WTC11 (cell line): ENCODE measurements at regions of chr17 and their contacts with region 1.

Region 1: DNA sequence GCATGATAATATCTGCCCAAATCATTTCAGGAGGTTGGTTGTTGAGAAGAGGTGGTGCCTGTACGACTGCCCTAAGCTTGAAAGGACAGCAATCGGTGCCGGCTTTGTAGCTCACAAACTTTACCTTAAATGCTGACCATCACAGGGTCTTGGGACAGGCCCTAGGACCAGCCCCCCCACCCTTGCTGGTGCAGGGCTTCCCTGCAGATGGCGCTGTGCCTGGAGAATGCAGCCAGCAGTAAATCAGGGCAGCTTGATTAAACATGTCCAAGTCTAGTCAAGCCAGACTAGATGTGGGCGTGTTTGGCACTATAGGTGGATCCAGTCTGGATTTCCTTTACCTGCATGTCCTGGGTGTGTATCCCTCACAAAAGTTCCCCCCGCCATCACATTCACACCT is 135.5 kb upstream of the CRHR1 start:
- DNase-seq: peak; percentile 80
- ATAC-seq: peak; percentile 85
- H3K4me3 Mint-ChIP-seq: no peak overlapping the region
- H3K27ac Mint-ChIP-seq: no peak overlapping the region
- H3K4me1 Mint-ChIP-seq: peaks cover 16% of the 10 kb centered on the region
- H3K27me3 Mint-ChIP-seq: no peaks in the 10 kb centered on the region
- CTCF ChIP-seq: peak; percentile 70

Region 2: GRCh38 chr17:45628019-45628418 is 20.6 kb before region 1 on chr17:
- CTCF ChIA-PET with region 1: no interaction called
- POLR2A ChIA-PET with region 1: no interaction called
- DNase-seq: peak; percentile 35
- ATAC-seq: peak; percentile 60
- H3K4me3 Mint-ChIP-seq: no peak overlapping the region
- H3K27ac Mint-ChIP-seq: no peak overlapping the region
- H3K4me1 Mint-ChIP-seq: no peaks in the 10 kb centered on the region
- H3K27me3 Mint-ChIP-seq: no peaks in the 10 kb centered on the region
- CTCF ChIP-seq: no peak

Region 3: GRCh38 chr17:45666046-45666600 is 17.5 kb after region 1 on chr17:
- CTCF ChIA-PET with region 1: interaction called, 13 read pairs
- POLR2A ChIA-PET with region 1: no interaction called
- DNase-seq: peak; percentile 26
- ATAC-seq: peak; percentile 50
- H3K4me3 Mint-ChIP-seq: no peak overlapping the region
- H3K27ac Mint-ChIP-seq: no peak overlapping the region
- H3K4me1 Mint-ChIP-seq: no peaks in the 10 kb centered on the region
- H3K27me3 Mint-ChIP-seq: no peaks in the 10 kb centered on the region; the same call in 1 of the 2 replicates
- CTCF ChIP-seq: no peak

Region 4: DNA sequence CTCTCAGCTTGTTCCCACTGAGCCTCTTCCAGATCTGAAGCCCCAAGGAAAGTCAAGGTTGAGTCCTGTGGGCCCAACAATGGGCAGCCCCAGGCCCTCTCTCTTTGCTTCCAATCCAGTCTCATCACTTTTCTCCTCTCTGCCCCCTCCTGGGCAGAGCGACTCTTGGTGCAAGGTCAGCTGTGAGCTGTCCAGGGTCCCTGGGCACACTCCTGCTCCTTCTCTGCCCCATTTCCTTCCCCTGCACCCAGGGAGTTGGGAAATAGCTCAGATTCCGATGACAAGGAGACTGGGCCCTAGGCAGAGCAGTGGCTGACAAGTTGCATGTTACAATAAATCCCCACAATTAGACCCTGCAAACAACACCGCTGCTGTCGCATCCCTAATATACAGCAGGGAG is 119.4 kb after region 1 on chr17:
- CTCF ChIA-PET with region 1: interaction called, 12 read pairs
- POLR2A ChIA-PET with region 1: no interaction called
- DNase-seq: peak; percentile 51
- ATAC-seq: peak; percentile 80
- H3K4me3 Mint-ChIP-seq: no peak overlapping the region
- H3K27ac Mint-ChIP-seq: no peak overlapping the region
- H3K4me1 Mint-ChIP-seq: peaks cover 27% of the 10 kb centered on the region
- H3K27me3 Mint-ChIP-seq: no peaks in the 10 kb centered on the region
- CTCF ChIP-seq: no peak

Region 5: DNA sequence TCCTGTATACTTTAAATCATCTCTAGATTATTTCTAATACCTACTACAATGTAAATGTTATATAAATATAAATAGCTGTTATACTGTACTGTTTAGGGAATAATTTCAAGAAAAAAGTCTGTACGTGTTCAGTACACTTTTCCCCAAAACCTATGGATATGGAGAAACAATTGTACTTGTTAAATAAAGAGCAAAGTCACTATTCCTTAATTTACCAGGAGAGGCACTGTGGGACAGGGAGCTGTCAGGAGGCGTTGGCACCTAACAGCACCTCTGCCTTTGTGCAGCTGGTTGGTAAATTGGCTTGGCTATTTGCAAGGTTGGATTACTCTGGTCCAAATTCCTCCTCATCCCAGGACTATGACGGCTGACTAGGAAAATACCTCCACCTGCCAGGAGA is 163.5 kb after region 1 on chr17:
- CTCF ChIA-PET with region 1: interaction called, 11 read pairs
- POLR2A ChIA-PET with region 1: no interaction called
- DNase-seq: no peak
- ATAC-seq: peak; percentile 30
- H3K4me3 Mint-ChIP-seq: no peak overlapping the region
- H3K27ac Mint-ChIP-seq: no peak overlapping the region
- H3K4me1 Mint-ChIP-seq: peaks cover 14% of the 10 kb centered on the region
- H3K27me3 Mint-ChIP-seq: no peaks in the 10 kb centered on the region; the same call in 1 of the 2 replicates
- CTCF ChIP-seq: no peak

Region 6: DNA sequence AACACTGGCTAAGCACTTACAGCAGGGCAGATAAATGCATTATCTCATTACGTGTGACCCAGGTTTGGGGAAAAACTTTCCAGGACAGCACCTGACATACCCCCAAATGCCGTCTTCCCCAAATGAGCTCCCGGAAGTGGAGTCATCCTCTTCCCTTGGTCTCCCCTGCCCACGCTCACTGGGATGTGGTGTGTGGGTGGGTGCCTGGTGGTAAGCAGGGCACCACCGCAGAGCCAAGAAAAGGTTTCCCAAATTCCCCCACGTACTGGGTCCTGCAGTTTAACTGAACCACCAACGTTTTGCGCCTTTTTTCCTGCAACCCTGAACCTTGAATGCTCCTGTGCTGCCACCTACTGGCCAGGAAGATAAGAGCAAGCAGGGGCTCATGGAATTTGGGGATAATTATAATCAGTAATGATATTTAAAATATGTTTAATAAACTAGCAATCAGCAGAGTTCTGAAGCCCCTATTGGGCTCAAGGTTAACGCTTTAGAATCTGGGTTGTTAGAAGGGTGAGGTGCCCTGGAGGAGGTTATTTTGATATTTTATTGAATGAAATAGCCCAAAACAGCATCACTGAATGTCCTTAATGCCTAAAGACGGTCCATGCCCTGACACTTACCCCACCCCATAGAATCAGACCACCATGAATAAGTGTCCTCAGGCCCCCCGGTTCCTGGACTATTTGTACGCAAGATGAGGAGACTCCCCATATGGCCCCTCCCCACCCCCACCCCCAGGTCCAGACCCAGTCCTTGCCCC is 204.1 kb after region 1 on chr17:
- CTCF ChIA-PET with region 1: interaction called, 19 read pairs
- POLR2A ChIA-PET with region 1: no interaction called
- DNase-seq: peak; percentile 76
- ATAC-seq: peak; percentile 65
- H3K4me3 Mint-ChIP-seq: no peak overlapping the region
- H3K27ac Mint-ChIP-seq: no peak overlapping the region
- H3K4me1 Mint-ChIP-seq: no peaks in the 10 kb centered on the region
- H3K27me3 Mint-ChIP-seq: peaks cover 5% of the 10 kb centered on the region
- CTCF ChIP-seq: peak; percentile 89

Region 7: GRCh38 chr17:45857977-45858709 is 209.5 kb after region 1 on chr17:
- CTCF ChIA-PET with region 1: interaction called, 19 read pairs
- POLR2A ChIA-PET with region 1: no interaction called
- DNase-seq: peak; percentile 61
- ATAC-seq: peak; percentile 77
- H3K4me3 Mint-ChIP-seq: no peak overlapping the region
- H3K27ac Mint-ChIP-seq: no peak overlapping the region
- H3K4me1 Mint-ChIP-seq: no peaks in the 10 kb centered on the region
- H3K27me3 Mint-ChIP-seq: peaks cover 11% of the 10 kb centered on the region
- CTCF ChIP-seq: no peak